Aorta (tissue), 5 donors: ENCODE measurements at regions of chr4 and their contacts with region 1.

Region 1: DNA sequence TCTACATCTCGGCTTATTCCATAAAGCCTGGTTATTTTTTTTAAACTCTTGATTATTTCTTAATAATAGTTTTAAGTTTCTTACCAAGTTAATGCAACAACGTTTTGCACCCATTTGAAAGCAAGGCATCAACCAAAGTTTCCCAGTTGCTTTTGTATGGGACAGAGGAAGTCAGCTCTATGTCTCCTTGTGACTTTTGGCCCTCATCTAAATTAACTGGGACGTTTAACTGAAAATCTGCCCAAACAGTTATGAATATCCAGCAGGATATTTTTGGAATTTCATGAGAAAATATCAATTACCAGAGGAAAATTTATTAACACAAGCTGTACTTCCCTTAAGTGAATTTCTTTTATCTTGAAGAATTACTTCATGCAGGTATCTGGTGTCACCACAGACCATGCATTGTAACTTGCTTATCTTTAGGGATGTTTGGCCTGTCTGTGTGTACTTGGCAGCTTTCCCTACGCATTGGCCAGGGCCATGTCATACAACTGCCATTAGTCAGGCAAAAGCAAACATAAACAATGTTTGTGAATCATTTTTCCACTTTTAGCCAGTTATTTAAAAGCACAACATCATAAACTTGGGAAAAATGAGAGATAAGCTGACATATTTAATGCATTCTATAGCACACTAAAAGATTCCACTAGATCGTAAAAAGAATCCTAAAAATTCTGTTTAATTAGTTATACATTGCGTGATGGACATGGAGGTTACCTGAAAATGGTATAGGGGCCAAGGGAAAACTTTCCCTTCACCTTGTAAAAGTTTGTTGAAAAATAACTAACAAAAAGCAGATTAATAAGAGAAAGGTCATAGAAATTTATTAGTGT is 101.4 kb upstream of the PDE5A start:
- DNase-seq: peak; percentile 75 to 83
- ATAC-seq: peak; percentile 59
- H3K4me3 ChIP-seq: no peak overlapping the region
- H3K27ac ChIP-seq: peak overlapping the region; percentile 98 to 99
- H3K4me1 ChIP-seq: peaks cover 7 to 19% of the 10 kb centered on the region in 2 donors
- H3K27me3 ChIP-seq: no peaks in the 10 kb centered on the region

Region 2: DNA sequence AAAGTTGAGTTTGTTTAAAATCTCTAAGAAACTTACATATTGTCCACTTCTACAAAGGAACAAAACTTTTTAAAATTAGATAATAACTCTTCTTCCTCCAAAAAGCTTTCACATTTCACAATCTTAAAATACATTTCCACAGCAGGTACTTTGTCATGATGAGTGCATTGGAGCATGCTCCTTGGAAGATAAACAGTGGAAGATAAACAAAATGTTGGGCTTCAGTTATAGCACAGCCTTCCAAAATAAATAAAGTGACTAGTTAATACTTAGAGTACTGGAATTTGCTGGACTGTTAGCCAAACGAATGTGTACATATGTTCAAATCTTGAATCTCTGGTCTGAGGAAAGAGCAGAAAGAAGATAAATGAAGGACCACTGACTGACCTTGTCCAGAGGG is 46.5 kb before region 1 on chr4:
- intact Hi-C with region 1: loop called in 1 of 2 experiments (anchors 5 kb)
- DNase-seq: no peak
- ATAC-seq: peak; percentile 79
- H3K4me3 ChIP-seq: no peak overlapping the region
- H3K27ac ChIP-seq: peak overlapping the region in 1 of 2 donors; percentile 67
- H3K4me1 ChIP-seq: peaks cover 8 to 9% of the 10 kb centered on the region in 2 donors
- H3K27me3 ChIP-seq: no peaks in the 10 kb centered on the region

Region 3: GRCh38 chr4:119833611-119834010 is 103.6 kb after region 1 on chr4:
- intact Hi-C with region 1: loop called (anchors 5 to 10 kb)
- DNase-seq: no peak
- ATAC-seq: peak; percentile 85
- H3K4me3 ChIP-seq: no peak overlapping the region
- H3K27ac ChIP-seq: peak overlapping the region in 1 of 2 donors; percentile 93
- H3K4me1 ChIP-seq: peaks cover 3 to 5% of the 10 kb centered on the region in 2 donors
- H3K27me3 ChIP-seq: no peaks in the 10 kb centered on the region

Region 4: DNA sequence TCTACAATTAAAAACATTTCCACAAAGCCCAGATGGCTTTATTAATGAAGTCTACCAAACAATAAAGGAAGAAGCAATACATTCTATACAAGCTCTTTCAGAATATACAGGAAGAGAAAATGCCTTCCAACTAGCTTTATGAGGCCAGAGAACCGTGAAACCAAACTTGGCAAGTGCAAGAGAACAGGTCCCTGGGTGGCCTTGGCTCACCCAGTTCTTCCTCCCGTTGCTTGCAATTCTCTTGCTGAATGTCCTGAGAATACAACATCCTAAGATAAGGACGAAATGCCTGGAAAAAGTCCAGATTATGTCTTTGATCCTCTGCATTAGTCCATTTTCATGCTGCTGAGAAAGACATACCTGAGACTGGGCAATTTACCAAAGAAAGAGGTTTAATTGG is 131.7 kb after region 1 on chr4:
- intact Hi-C with region 1: loop called in 1 of 2 experiments (anchors 10 kb)
- DNase-seq: no peak
- ATAC-seq: no peak
- H3K4me3 ChIP-seq: no peak overlapping the region
- H3K27ac ChIP-seq: no peak overlapping the region
- H3K4me1 ChIP-seq: no peaks in the 10 kb centered on the region
- H3K27me3 ChIP-seq: no peaks in the 10 kb centered on the region

Region 5: DNA sequence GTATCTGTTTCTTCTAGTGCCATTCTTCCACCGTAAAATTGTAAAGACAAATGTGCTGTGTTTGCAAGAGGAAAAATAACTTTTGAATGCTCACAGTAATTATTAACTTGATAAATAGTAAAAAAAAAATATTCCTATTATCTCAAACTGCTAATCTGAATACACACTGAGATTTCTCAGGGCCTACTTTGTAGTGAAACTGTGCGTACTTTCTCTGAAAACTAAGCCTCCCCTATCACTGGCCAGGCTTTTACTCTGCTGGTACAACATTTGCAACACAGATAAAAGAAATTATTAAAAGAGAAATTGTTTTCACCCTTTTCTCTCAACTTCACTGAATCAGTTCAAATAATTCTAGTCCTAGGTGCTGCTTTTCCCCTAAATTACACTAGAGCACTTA is 1055.1 kb after region 1 on chr4:
- intact Hi-C with region 1: no loop called
- DNase-seq: no peak
- ATAC-seq: no peak
- H3K4me3 ChIP-seq: no peak overlapping the region
- H3K27ac ChIP-seq: no peak overlapping the region
- H3K4me1 ChIP-seq: no peaks in the 10 kb centered on the region
- H3K27me3 ChIP-seq: no peaks in the 10 kb centered on the region